GM12878 (cell line): ENCODE measurements at regions of chr6 and their contacts with region 1.

Region 1: GRCh38 chr6:135191508-135192255 is 10.6 kb downstream of the MYB start:
- DNase-seq: no peak
- ATAC-seq: peak; percentile 78
- H3K4me3 ChIP-seq: no peak overlapping the region
- H3K27ac ChIP-seq: peak overlapping the region; percentile 56
- H3K4me1 ChIP-seq: peaks cover 9% of the 10 kb centered on the region; the same call in 1 of the 2 replicates
- H3K27me3 ChIP-seq: no peaks in the 10 kb centered on the region
- CTCF ChIP-seq: no peak
- EP300 ChIP-seq: no peak
- POLR2A ChIP-seq: no peak
- RAD21 ChIP-seq: no peak

Region 2: GRCh38 chr6:135115834-135116233 is 75.8 kb before region 1 on chr6:
- CTCF ChIA-PET with region 1: no interaction called
- POLR2A ChIA-PET with region 1: no interaction called
- RAD21 ChIA-PET with region 1: no interaction called
- SMC1A ChIA-PET with region 1: no interaction called
- in situ Hi-C with region 1: no loop called
- intact Hi-C with region 1: no loop called
- DNase-seq: no peak
- ATAC-seq: peak; percentile 14
- H3K4me3 ChIP-seq: no peak overlapping the region
- H3K27ac ChIP-seq: no peak overlapping the region; the same call in 1 of the 2 replicates
- H3K4me1 ChIP-seq: peaks cover 38% of the 10 kb centered on the region
- H3K27me3 ChIP-seq: no peaks in the 10 kb centered on the region
- CTCF ChIP-seq: no peak
- EP300 ChIP-seq: no peak; a peak in 1 of 4 replicates
- POLR2A ChIP-seq: no peak
- RAD21 ChIP-seq: no peak

Region 3: GRCh38 chr6:135202836-135203235 is 11.2 kb after region 1 on chr6:
- CTCF ChIA-PET with region 1: interaction called, 5 read pairs
- POLR2A ChIA-PET with region 1: interaction called, 4 read pairs
- RAD21 ChIA-PET with region 1: no interaction called
- SMC1A ChIA-PET with region 1: interaction called, 23 read pairs
- in situ Hi-C with region 1: no loop called
- intact Hi-C with region 1: no loop called
- DNase-seq: no peak
- ATAC-seq: no peak
- H3K4me3 ChIP-seq: no peak overlapping the region
- H3K27ac ChIP-seq: no peak overlapping the region
- H3K4me1 ChIP-seq: no peaks in the 10 kb centered on the region
- H3K27me3 ChIP-seq: no peaks in the 10 kb centered on the region
- CTCF ChIP-seq: no peak
- EP300 ChIP-seq: no peak
- POLR2A ChIP-seq: no peak
- RAD21 ChIP-seq: no peak

Region 4: GRCh38 chr6:135819665-135820064 is 628.0 kb after region 1 on chr6:
- CTCF ChIA-PET with region 1: no interaction called
- POLR2A ChIA-PET with region 1: no interaction called
- RAD21 ChIA-PET with region 1: no interaction called
- SMC1A ChIA-PET with region 1: no interaction called
- in situ Hi-C with region 1: no loop called
- intact Hi-C with region 1: no loop called
- DNase-seq: no peak
- ATAC-seq: no peak
- H3K4me3 ChIP-seq: no peak overlapping the region
- H3K27ac ChIP-seq: no peak overlapping the region
- H3K4me1 ChIP-seq: no peaks in the 10 kb centered on the region
- H3K27me3 ChIP-seq: no peaks in the 10 kb centered on the region; a peak in 1 of 4 replicates
- CTCF ChIP-seq: no peak
- EP300 ChIP-seq: no peak
- POLR2A ChIP-seq: no peak
- RAD21 ChIP-seq: no peak